Spleen (tissue), 13 donors: ENCODE measurements at regions of chr7 and their contacts with region 1.

Region 1: GRCh38 chr7:22110227-22110839 is 164.6 kb upstream of the CDCA7L start:
- DNase-seq: no peak
- H3K4me3 ChIP-seq: no peak overlapping the region
- H3K27ac ChIP-seq: peak overlapping the region in 1 of 8 donors; percentile 11
- H3K4me1 ChIP-seq: peaks cover 0 to 8% (median 0%) of the 10 kb centered on the region in 6 donors
- H3K27me3 ChIP-seq: no peaks in the 10 kb centered on the region
- CTCF ChIP-seq: peak; percentile 42 to 84 (median 69)
- POLR2A ChIP-seq: no peak

Region 2: DNA sequence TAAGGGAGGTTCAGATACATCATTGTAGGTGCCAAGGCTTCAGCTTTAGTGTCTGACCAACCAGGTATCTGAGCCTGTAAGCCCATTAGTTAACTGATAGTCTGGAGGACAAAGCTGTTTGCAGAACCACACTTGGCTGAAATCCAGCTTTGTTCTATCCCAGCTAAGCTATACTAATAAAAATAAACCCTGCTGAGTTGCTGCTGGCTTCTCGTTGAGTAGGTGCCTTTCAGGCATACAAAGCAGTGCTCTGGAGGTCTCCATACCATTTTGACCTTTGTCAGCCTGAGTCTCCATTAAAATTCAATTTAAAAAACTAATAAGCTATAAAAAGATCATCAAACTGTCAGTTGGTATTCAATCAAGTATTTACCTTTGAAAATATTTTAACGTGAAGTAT is 186.7 kb before region 1 on chr7:
- intact Hi-C with region 1: no loop called
- DNase-seq: no peak
- H3K4me3 ChIP-seq: no peak overlapping the region
- H3K27ac ChIP-seq: no peak overlapping the region
- H3K4me1 ChIP-seq: peaks cover 0 to 33% (median 2%) of the 10 kb centered on the region in 6 donors
- H3K27me3 ChIP-seq: no peaks in the 10 kb centered on the region
- CTCF ChIP-seq: no peak
- POLR2A ChIP-seq: no peak

Region 3: DNA sequence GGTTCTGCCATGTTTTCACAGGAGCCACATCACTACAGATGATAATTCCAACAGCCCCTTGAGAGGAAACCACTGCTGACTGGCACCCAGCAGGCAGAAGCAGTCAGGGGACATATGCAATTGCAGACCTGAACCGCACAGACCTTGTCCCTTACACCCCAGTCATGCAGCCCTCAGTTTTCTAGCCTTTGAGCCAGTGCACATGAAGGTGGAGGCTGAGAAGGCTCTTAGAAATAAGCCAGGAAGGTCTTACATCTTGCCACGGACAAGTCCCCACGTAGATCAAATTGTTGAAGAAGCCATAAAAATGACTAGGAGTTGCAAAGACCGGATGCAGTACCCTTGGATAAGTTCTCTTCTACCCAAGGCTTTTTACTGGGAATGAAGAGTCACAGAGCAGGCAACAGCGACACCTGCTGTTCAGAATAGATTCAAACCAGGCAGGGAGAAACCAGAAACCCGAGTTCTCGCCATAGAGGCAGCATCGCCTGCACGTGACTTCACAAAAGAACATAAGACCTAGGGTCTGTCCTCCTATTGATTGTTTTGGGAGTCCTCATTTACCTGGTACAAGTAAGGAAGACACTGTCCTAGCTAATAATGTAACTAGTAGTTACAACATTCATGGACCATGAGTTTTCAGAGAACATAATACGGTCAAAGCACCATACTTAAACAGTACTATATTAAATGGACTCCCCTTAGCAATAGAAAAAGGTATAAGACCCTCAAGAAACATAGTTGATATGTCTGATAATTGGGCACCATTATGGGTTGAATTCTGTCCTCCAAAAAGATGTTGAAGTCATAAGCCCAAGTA is 378.5 kb after region 1 on chr7:
- intact Hi-C with region 1: loop called (anchors 5 kb)
- DNase-seq: no peak
- H3K4me3 ChIP-seq: no peak overlapping the region
- H3K27ac ChIP-seq: peak overlapping the region in 5 of 8 donors; percentile 26 to 58 (median 53)
- H3K4me1 ChIP-seq: peaks cover 0 to 9% (median 4%) of the 10 kb centered on the region in 6 donors
- H3K27me3 ChIP-seq: peaks cover 0 to 4% (median 0%) of the 10 kb centered on the region in 7 donors
- CTCF ChIP-seq: peak; percentile 54 to 94 (median 88)
- POLR2A ChIP-seq: no peak